ENCODE measurements at regions of chr17 and their contacts with region 1.

Region 1: GRCh38 chr17:59155439-59156182 is at the start of gene PRR11:
- DNase-seq: peak; percentile 95
- ATAC-seq: peak; percentile 95
- total RNA-seq, gene PRR11: 1.3 TPM

Region 2: GRCh38 chr17:58452521-58453137 is 703.0 kb before region 1 on chr17:
- intact Hi-C with region 1: no loop called
- DNase-seq: no peak
- ATAC-seq: no peak

Region 3: DNA sequence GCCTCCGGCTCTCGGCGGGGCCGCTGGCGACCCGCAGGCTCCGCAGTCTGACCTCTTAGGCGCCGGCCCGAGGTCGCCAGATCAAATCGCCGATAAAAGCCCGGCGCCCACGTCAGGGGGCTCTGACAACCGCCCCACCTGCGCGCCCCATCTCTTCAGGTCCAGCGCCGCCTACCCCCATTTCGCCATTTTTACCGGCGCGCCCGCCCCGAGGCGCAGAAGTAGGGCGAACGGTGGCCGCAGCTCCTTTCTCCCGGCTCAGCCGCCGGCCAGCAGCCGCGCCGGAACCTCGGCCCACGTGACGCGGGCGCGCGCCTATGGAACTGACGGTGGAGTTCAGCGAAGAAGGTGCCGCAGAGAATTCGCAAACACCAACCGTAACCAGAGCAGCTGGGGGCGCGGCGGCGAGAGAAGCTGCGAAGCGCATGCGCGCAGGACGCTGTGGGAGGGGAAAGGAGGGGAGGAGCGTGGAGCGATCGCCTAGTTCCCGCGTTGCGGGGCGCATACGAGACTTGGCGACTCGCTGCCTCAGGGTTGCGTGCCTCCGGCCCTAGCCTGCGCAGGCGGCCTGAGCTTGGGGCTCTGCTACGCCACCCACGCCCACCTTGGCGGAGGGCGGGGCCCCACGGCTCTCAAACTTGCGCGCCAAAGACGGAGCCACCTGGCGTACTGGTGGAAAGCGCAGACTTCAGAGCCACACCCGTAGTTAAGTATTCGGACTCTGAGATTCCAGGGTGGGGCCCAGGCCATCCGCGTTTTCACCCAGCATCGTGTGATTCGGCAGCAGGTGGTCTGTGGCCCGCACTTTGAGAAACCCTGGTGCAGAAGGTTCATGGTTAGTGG is 48.9 kb before region 1 on chr17 and contains the start of gene TRIM37:
- intact Hi-C with region 1: loop called (anchors 2 kb)
- DNase-seq: peak; percentile 98
- ATAC-seq: peak; percentile 97
- total RNA-seq, gene TRIM37: 19.5 TPM

Measured in Right ventricle myocardium superior (tissue), 1 donor.